HCT116 (cell line): ENCODE measurements at regions of chr21 and their contacts with region 1.

Region 1: GRCh38 chr21:43938751-43939442 is 73.2 kb upstream of the TRAPPC10 start:
- DNase-seq: peak; percentile 27
- ATAC-seq: peak; percentile 97
- H3K4me3 ChIP-seq: peak overlapping the region; percentile 16 to 36; a peak in 2 of 4 replicates
- H3K27ac ChIP-seq: no peak overlapping the region; the same call in 1 of the 2 replicates
- H3K4me1 ChIP-seq: peaks cover 3 to 11% of the 10 kb centered on the region in 2 experiments; a peak in 3 of 4 replicates
- H3K27me3 ChIP-seq: no peaks in the 10 kb centered on the region
- CTCF ChIP-seq: peak; percentile 99 to 100 (median 100)
- POLR2A ChIP-seq: no peak
- RAD21 ChIP-seq: peak; percentile 90

Region 2: DNA sequence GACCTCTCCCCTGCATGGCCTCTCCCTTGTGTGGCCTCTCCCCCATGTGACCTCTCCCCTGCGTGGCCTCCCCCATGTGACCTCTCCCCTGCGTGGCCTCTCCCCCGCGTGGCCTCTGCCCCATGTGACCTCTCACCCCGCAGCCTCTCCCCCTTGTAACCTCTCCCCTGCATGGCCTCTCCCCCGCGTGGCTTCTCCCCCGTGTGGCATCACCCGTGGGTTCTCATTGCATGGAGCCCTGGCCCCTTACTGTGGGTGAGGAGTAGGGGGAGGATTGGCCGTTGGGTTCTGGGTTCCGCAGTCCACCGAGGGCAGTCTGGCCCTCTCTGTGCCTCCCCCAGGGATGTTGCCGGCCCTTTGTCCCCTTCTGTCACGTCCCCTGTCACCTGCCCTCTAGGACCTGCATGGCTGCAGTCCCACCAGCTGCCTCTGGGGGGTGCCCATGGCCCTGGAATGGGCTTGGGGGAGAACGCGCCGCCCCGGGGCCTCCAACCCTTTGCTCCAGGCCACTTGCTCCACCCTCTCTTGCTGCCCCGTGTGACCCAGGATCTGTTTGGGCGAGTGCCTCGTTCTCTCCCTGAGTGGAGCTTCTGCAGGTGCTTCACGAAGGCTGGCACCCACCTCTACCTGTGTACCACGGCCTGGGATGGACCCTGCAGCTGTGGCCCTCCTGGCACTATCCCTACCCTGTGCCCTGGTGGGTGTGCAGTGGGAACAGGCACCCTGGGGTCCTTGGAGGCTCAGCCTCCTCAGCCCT is 128.2 kb before region 1 on chr21:
- CTCF ChIA-PET with region 1: interaction called, 10 read pairs
- POLR2A ChIA-PET with region 1: no interaction called
- RAD21 ChIA-PET with region 1: interaction called in 1 of 2 experiments, 3 read pairs
- intact Hi-C with region 1: loop called (anchors 1 kb)
- DNase-seq: peak; percentile 36
- ATAC-seq: peak; percentile 85
- H3K4me3 ChIP-seq: no peak overlapping the region
- H3K27ac ChIP-seq: no peak overlapping the region
- H3K4me1 ChIP-seq: peaks cover 10 to 22% of the 10 kb centered on the region in 2 experiments
- H3K27me3 ChIP-seq: no peaks in the 10 kb centered on the region
- CTCF ChIP-seq: peak in 2 of 3 experiments; percentile 96 to 97; a peak in 4 of 6 replicates
- POLR2A ChIP-seq: no peak
- RAD21 ChIP-seq: no peak

Region 3: GRCh38 chr21:43902441-43902840 is 36.5 kb before region 1 on chr21:
- CTCF ChIA-PET with region 1: no interaction called
- POLR2A ChIA-PET with region 1: no interaction called
- RAD21 ChIA-PET with region 1: no interaction called
- intact Hi-C with region 1: no loop called
- DNase-seq: no peak
- ATAC-seq: peak; percentile 27; the same call in 1 of the 2 replicates
- H3K4me3 ChIP-seq: no peak overlapping the region
- H3K27ac ChIP-seq: no peak overlapping the region
- H3K4me1 ChIP-seq: no peaks in the 10 kb centered on the region
- H3K27me3 ChIP-seq: no peaks in the 10 kb centered on the region
- CTCF ChIP-seq: no peak
- POLR2A ChIP-seq: no peak
- RAD21 ChIP-seq: no peak

Region 4: DNA sequence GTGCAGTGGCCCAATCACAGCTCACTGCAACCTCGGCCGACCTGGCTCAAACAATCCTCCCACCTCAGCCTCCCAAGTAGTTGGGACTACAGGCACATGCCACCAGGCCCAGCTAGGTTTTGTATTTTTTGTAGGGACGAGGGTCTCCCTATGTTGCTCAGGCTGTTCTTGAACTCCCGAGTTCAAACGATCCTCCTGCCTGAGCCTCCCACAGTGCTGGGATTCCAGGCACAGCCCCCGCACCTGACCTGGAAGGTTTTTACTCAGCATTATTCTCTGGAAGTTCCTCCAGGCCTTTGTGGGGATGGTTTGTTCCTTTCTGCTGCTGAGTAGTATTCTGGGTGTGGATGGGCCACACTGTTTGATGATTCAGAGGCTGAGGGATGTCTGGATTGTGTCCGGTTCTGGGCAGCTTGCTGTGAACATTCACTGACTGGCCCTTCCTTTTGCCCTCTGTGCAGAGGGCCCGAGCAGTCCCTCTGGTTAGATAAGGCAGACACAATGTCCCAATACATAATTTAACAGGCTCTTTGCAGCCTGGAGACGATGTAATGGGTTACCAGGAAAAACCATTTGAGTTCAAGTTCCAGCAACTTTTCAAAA is 67.2 kb after region 1 on chr21:
- CTCF ChIA-PET with region 1: no interaction called
- POLR2A ChIA-PET with region 1: no interaction called
- RAD21 ChIA-PET with region 1: no interaction called
- intact Hi-C with region 1: loop called (anchors 10 kb)
- DNase-seq: no peak
- ATAC-seq: no peak; the same call in 1 of the 2 replicates
- H3K4me3 ChIP-seq: no peak overlapping the region
- H3K27ac ChIP-seq: no peak overlapping the region
- H3K4me1 ChIP-seq: peaks cover 6 to 9% of the 10 kb centered on the region in 2 experiments
- H3K27me3 ChIP-seq: no peaks in the 10 kb centered on the region
- CTCF ChIP-seq: no peak
- POLR2A ChIP-seq: no peak
- RAD21 ChIP-seq: no peak